ENCODE measurements at regions of chr11 and their contacts with region 1.

Region 1: GRCh38 chr11:118353084-118353710 is 6.2 kb upstream of the UBE4A start:
- DNase-seq: no peak
- H3K4me3 Mint-ChIP-seq: no peak overlapping the region
- H3K27ac Mint-ChIP-seq: peak overlapping the region; percentile 71
- H3K4me1 Mint-ChIP-seq: peaks cover 23% of the 10 kb centered on the region
- H3K27me3 Mint-ChIP-seq: no peaks in the 10 kb centered on the region

Region 2: GRCh38 chr11:118290923-118291322 is 62.3 kb before region 1 on chr11:
- CTCF ChIA-PET with region 1: interaction called, 34 read pairs
- POLR2A ChIA-PET with region 1: no interaction called
- intact Hi-C with region 1: no loop called
- DNase-seq: peak; percentile 61
- H3K4me3 Mint-ChIP-seq: no peak overlapping the region
- H3K27ac Mint-ChIP-seq: peak overlapping the region; percentile 23
- H3K4me1 Mint-ChIP-seq: peaks cover 14% of the 10 kb centered on the region
- H3K27me3 Mint-ChIP-seq: no peaks in the 10 kb centered on the region

Region 3: GRCh38 chr11:118338637-118339061 is 14.5 kb before region 1 on chr11:
- CTCF ChIA-PET with region 1: interaction called, 16 read pairs
- POLR2A ChIA-PET with region 1: interaction called, 6 read pairs
- intact Hi-C with region 1: no loop called
- DNase-seq: peak; percentile 95
- H3K4me3 Mint-ChIP-seq: peak overlapping the region; percentile 82
- H3K27ac Mint-ChIP-seq: peak overlapping the region; percentile 98
- H3K4me1 Mint-ChIP-seq: peaks cover 48% of the 10 kb centered on the region
- H3K27me3 Mint-ChIP-seq: no peaks in the 10 kb centered on the region

Region 4: DNA sequence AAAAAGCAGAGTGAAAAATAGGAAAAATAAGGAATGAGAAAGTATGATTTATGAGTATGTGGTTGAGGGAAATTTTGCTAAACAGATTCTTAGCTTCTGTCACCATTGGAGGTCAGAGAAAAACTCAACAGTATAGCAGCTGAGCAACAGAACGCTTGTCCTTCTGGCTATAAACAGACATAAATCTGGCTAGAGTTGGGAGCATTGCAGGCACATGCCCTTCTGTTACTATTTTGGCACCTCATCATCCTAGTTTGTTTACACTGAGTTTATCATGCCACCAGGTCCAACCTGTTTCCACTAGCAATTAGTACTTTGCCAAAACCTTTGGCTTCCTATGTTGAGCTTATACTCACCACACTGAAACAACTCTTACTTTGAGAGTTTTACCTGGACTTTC is 13.1 kb after region 1 on chr11:
- CTCF ChIA-PET with region 1: interaction called, 14 read pairs
- POLR2A ChIA-PET with region 1: no interaction called
- intact Hi-C with region 1: no loop called
- DNase-seq: no peak
- H3K4me3 Mint-ChIP-seq: no peak overlapping the region
- H3K27ac Mint-ChIP-seq: no peak overlapping the region
- H3K4me1 Mint-ChIP-seq: peaks cover 26% of the 10 kb centered on the region
- H3K27me3 Mint-ChIP-seq: no peaks in the 10 kb centered on the region

Region 5: DNA sequence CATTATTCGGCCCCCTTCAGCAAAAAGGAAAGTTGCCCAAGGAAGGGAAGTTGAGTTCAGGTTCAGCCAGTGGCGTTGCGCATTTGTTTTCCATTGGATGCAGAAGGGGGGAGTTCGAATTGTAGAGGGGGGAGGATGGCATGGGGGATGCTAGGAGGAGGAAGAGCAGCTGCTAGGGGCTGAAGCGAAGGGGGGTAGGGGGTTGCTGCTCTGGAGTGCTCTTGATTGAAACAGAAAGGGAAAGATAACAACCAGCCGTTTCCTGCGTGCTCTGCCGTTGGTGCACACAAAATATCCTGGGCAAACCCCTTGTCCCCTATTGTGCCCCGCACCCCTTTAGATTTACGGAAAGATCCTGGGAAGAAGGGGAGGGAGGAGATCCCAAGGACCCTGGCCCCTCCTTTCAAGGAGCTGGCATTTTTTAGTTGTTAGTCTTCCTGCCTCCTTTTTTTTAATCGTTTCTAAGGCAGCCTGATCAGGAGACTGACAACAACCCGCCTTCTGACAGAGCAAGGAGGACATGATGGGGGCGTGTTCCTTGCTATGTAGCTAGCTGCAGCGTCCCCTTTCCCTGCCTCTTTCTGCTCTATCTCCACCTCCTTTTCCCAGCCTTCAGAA is 85.2 kb after region 1 on chr11:
- CTCF ChIA-PET with region 1: no interaction called
- POLR2A ChIA-PET with region 1: no interaction called
- intact Hi-C with region 1: no loop called
- DNase-seq: peak; percentile 62
- H3K4me3 Mint-ChIP-seq: peak overlapping the region; percentile 91
- H3K27ac Mint-ChIP-seq: peak overlapping the region; percentile 97
- H3K4me1 Mint-ChIP-seq: peaks cover 58% of the 10 kb centered on the region
- H3K27me3 Mint-ChIP-seq: no peaks in the 10 kb centered on the region

Measured in activated CD4-positive, alpha-beta memory T cell treated with anti-CD3 and anti-CD28 coated beads for 36 hours (primary cell).